Breast epithelium (tissue), 4 donors: ENCODE measurements at regions of chr17 and their contacts with region 1.

Region 1: DNA sequence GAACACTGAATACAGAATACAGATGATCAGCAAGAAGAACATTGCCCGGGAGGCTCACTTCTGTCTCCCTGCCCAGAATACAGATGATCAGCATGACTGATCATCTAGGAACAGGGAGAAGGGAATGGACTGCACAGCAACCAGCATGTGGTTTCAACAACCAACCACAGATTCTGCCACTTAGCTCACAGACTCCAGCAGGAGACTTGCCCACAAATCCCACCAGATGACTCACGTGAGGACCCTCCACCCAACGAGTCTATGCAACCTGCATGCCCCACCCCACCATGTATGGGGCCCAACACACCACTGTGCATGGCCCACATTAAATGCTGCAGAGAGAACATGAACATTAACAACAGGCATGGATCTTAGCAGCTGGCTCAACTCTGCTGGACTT is 36.1 kb upstream of the ALOX12 start:
- DNase-seq: no peak
- H3K4me3 ChIP-seq: no peak overlapping the region
- H3K27ac ChIP-seq: no peak overlapping the region
- H3K4me1 ChIP-seq: no peaks in the 10 kb centered on the region
- H3K27me3 ChIP-seq: no peaks in the 10 kb centered on the region
- CTCF ChIP-seq: no peak
- POLR2A ChIP-seq: no peak

Region 2: GRCh38 chr17:6815775-6816174 is 143.9 kb before region 1 on chr17:
- intact Hi-C with region 1: no loop called
- DNase-seq: no peak
- H3K4me3 ChIP-seq: no peak overlapping the region
- H3K27ac ChIP-seq: no peak overlapping the region
- H3K4me1 ChIP-seq: no peaks in the 10 kb centered on the region
- H3K27me3 ChIP-seq: no peaks in the 10 kb centered on the region
- CTCF ChIP-seq: no peak
- POLR2A ChIP-seq: no peak

Region 3: DNA sequence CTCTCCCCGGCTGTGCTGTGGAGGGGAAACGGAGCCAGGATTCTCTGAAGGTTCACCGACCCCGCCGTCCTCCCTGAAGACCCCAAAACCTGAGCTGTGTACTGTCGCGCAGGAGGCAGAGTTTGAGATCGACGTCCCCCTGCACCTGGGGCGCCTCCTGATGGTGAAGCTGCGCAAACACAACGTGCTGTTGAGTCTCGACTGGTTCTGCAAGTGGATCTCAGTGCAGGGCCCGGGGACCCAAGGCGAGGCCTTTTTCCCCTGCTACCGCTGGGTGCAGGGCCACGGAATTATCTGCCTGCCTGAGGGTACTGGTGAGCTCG is 65.5 kb before region 1 on chr17:
- intact Hi-C with region 1: loop called (anchors 5 kb)
- DNase-seq: no peak
- H3K4me3 ChIP-seq: peak overlapping the region in 2 of 3 donors; percentile 35 to 52
- H3K27ac ChIP-seq: no peak overlapping the region
- H3K4me1 ChIP-seq: no peaks in the 10 kb centered on the region
- H3K27me3 ChIP-seq: no peaks in the 10 kb centered on the region
- CTCF ChIP-seq: no peak
- POLR2A ChIP-seq: no peak